A549 (cell line): ENCODE measurements at regions of chr10 and their contacts with region 1.

Region 1: DNA sequence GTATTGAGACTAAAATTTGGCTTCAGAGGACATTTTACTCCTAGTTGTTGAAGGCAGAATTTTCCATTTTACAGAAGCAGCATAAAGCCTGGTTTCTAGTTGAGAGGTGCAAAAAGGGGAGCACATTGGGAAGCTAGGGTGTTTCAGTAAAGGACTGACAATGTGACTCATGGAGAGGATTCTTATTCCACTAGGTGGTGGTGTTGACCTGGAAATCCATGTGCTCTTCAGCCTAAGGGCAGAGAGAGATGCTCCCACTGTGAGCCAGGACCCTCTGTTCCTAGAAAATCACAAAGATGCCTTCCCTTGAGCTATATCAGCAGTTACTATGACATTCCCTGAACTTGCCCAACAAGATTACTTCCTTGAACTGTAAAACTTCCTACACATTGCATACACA is 687.8 kb downstream of the IPMK start:
- DNase-seq: peak; percentile 2 to 60
- ATAC-seq: peak; percentile 91 to 96; a peak in 5 of 6 replicates
- H3K4me3 ChIP-seq: no peak overlapping the region
- H3K27ac ChIP-seq: no peak overlapping the region
- H3K4me1 ChIP-seq: no peaks in the 10 kb centered on the region
- CTCF ChIP-seq: peak; percentile 61
- EP300 ChIP-seq: no peak
- POLR2A ChIP-seq: no peak
- RAD21 ChIP-seq: peak; percentile 86 to 89

Region 2: DNA sequence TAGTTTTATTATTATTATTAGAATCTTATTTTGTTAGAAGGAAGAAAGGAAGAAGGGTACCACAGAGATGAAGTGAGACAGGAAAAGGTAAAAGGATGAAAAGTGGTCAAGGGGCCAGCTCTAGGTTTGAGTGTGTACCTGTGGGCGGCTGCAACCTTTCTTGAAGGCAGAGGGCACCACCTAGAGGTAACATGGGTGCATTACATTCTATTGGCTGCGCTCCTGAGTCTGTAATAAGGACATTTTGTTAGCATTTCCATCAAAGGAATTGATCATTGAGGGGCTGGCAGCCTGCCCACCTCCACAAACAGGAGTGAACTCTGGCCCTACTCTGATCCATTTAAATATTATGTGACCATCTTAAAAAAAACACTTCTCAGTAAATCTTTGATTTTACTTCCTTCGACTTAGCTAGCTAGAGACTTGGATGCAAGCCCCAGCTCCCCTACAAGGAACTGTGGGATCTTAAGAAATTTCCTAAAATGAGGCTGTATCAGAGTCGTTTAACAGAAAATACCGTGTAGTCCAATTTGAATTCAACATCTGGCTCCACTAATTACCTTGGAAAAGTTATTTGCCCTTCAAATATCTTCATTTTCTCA is 77.3 kb after region 1 on chr10:
- CTCF ChIA-PET with region 1: interaction called, 58 read pairs
- POLR2A ChIA-PET with region 1: no interaction called
- DNase-seq: peak; percentile 21 to 76
- ATAC-seq: peak; percentile 81 to 96
- H3K4me3 ChIP-seq: no peak overlapping the region
- H3K27ac ChIP-seq: no peak overlapping the region
- H3K4me1 ChIP-seq: no peaks in the 10 kb centered on the region
- CTCF ChIP-seq: peak; percentile 86
- EP300 ChIP-seq: no peak
- POLR2A ChIP-seq: no peak
- RAD21 ChIP-seq: peak; percentile 89 to 92

Region 3: GRCh38 chr10:57849691-57850357 is 269.9 kb after region 1 on chr10:
- CTCF ChIA-PET with region 1: interaction called, 24 read pairs
- POLR2A ChIA-PET with region 1: no interaction called
- DNase-seq: peak in 1 of 2 experiments; percentile 33
- ATAC-seq: no peak
- H3K4me3 ChIP-seq: no peak overlapping the region
- H3K27ac ChIP-seq: no peak overlapping the region
- H3K4me1 ChIP-seq: no peaks in the 10 kb centered on the region
- CTCF ChIP-seq: peak; percentile 76
- EP300 ChIP-seq: no peak
- POLR2A ChIP-seq: no peak
- RAD21 ChIP-seq: peak; percentile 76 to 87

Region 4: DNA sequence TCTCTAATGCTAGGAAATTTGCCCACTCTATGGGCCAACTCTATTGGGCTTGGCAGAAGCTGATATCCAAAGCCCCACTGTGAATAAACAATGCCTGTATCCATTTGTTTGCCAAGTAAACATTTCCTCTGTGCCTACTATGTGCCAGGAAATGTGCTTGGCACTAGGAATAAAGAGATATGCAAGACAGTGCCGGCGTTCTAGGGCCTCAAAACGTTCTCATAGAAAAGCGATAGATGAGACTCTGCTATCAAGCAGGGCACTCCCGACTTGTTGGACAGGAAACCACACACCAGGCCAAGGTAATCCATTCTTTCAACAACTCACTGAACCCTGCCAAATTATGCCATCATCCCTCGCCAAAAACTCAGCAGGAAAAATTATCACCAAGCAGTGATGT is 491.0 kb after region 1 on chr10:
- CTCF ChIA-PET with region 1: interaction called, 25 read pairs
- POLR2A ChIA-PET with region 1: no interaction called
- DNase-seq: no peak
- ATAC-seq: no peak; a peak in 1 of 6 replicates
- H3K4me3 ChIP-seq: no peak overlapping the region
- H3K27ac ChIP-seq: no peak overlapping the region
- H3K4me1 ChIP-seq: no peaks in the 10 kb centered on the region
- CTCF ChIP-seq: no peak
- EP300 ChIP-seq: no peak
- POLR2A ChIP-seq: no peak
- RAD21 ChIP-seq: no peak

Region 5: DNA sequence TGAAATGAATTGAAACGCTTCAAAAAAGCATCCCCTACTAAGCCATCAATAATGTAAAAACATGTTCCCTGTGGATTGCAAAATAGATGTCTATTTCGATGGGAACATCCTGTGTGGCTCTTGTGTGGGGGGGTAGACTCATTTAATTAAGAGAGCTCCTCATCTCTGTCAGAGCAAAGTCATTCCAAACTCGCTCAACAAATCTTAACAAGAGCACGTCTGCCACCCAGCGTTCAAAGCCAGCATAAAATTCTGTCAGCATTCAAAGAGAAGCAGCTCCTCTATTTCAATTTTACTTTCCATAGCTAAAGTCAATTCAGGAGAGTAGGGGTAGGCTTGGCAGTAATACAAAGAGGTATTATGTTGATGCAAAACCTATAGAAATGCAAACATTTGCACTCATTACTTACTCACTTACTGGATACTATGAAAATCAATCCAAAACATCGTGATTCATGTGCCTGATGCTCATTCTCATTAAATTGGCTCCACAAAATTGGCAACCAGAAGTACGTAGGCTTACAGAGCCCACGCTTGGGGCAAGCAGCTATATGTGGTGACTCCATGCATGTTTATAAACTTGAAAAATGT is 572.8 kb after region 1 on chr10:
- CTCF ChIA-PET with region 1: interaction called, 23 read pairs
- POLR2A ChIA-PET with region 1: no interaction called
- DNase-seq: peak in 1 of 2 experiments; percentile 62
- ATAC-seq: peak; percentile 59 to 70; a peak in 5 of 6 replicates
- H3K4me3 ChIP-seq: no peak overlapping the region
- H3K27ac ChIP-seq: no peak overlapping the region
- H3K4me1 ChIP-seq: no peaks in the 10 kb centered on the region
- CTCF ChIP-seq: peak; percentile 72
- EP300 ChIP-seq: no peak
- POLR2A ChIP-seq: no peak
- RAD21 ChIP-seq: peak; percentile 83 to 85